Right ventricle myocardium superior (tissue), 1 donor: ENCODE measurements at regions of chr4 and their contacts with region 1.

Region 1: DNA sequence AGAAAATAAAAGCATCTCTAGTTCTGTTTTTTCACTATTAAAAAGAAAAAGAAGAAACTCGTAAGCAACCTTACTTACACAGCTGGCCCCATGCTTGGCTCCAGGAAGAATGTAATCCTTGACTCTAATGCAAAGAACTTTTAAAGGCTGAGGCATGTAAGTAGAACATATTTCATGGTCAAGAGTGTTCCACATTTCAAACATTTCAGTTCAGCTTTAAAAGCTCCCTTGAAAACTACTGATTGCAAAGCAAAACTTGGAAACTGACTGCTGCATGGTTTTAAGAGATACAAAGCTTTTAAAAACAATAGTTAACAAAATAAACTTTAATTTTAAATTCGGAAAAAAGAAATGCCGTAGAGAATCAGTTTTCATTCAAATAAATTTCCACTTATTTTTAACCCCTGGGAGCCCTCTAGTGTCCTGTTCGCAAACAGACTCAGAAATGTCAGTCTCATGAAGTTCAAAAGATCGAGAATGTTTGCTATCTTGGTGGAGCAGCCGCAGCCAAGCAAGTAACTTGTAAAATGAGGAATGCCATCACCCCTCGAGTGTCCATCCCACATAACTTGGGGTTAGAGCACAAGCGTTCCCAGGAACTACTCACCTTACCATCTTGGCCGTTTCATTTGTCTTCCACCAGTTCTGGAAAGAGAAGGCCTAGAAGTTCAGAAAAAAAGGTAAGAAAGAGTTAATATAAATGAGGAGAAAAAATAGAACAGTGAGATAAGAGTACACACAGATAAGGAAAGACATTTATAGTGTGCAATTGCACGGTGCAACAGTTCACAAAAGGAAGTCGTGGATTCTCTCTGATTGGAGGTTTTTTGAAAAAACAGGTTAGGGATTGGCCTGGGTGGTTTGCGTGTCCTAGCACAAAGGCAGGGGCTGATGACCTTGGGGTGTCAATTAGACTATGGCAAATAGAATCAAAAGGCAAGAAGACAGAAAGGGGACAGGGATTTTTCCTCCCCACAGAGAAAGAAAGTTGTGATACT is at the start of gene GASK1B:
- DNase-seq: peak; percentile 44
- ATAC-seq: peak; percentile 57
- total RNA-seq, gene GASK1B: 60.2 TPM

Region 2: DNA sequence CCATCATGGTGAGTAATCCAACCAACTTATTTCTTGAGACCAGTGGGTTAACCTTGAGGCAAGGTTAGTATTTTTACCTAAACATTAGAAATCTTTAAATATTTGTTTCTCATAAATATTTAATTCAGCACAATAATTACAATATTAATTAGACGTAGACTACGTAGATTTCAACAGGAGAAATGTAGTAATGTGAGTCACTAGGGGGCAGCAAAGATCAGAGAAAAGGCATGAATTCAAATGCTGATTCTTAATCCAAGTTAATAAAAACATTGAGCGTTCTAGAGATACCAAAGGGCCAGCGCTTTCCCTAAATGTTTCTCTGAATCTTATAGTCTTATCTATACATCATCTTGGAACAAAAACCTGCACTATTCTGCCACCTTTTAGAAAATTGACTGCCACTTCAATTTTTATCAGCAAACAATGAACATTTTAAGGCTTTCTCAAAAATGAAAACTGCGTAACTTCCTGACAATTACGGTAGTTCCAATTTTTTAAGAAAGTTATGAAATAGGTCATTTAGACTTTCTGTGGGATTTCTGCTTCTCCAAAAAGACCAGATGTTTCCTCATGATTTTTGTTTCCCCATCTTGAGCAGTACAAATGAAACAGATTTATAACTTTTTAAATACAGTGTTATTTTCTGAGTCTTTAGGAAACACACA is 180.4 kb before region 1 on chr4:
- intact Hi-C with region 1: loop called (anchors 2 kb)
- DNase-seq: no peak
- ATAC-seq: peak; percentile 95

Region 3: GRCh38 chr4:158006990-158007389 is 165.6 kb before region 1 on chr4:
- intact Hi-C with region 1: loop called (anchors 5 kb)
- DNase-seq: no peak
- ATAC-seq: peak; percentile 79